Vagina (tissue), 2 donors: ENCODE measurements at regions of chr1 and their contacts with region 1.

Region 1: GRCh38 chr1:86499987-86500593 is 31.4 kb downstream of the CLCA1 start:
- DNase-seq: no peak
- H3K4me3 ChIP-seq: no peak overlapping the region
- H3K27ac ChIP-seq: no peak overlapping the region
- H3K4me1 ChIP-seq: peaks cover 21% of the 10 kb centered on the region
- H3K27me3 ChIP-seq: no peaks in the 10 kb centered on the region
- CTCF ChIP-seq: peak; percentile 36 to 65 (median 64)
- POLR2A ChIP-seq: no peak

Region 2: DNA sequence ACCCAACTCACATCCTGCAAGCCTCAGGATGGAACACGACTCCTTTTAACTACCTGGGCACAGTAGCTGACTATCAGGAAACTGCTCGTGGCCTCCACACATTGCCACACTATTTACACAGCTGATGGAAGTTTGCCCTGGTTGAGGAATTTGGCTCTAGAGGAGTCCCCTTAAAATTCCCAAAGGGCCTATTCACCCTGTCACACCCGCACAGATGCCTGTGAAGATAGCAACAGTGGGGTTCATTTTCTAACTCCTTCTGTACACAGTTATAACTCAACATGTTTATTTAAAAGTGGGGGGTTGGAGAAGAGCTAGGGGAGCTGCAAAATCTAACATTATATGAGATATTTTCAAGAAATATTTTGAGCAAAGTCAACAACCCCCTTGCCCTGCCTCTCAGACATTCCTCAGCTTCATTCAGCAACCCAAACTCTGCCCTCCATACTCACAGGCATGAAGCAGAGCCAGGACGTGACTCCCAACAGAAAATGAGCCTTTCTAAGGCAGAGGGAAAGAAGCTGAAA is 955.3 kb before region 1 on chr1:
- intact Hi-C with region 1: no loop called
- DNase-seq: no peak
- H3K4me3 ChIP-seq: no peak overlapping the region
- H3K27ac ChIP-seq: no peak overlapping the region
- H3K4me1 ChIP-seq: peaks cover 18% of the 10 kb centered on the region
- H3K27me3 ChIP-seq: no peaks in the 10 kb centered on the region
- CTCF ChIP-seq: no peak
- POLR2A ChIP-seq: no peak

Region 3: DNA sequence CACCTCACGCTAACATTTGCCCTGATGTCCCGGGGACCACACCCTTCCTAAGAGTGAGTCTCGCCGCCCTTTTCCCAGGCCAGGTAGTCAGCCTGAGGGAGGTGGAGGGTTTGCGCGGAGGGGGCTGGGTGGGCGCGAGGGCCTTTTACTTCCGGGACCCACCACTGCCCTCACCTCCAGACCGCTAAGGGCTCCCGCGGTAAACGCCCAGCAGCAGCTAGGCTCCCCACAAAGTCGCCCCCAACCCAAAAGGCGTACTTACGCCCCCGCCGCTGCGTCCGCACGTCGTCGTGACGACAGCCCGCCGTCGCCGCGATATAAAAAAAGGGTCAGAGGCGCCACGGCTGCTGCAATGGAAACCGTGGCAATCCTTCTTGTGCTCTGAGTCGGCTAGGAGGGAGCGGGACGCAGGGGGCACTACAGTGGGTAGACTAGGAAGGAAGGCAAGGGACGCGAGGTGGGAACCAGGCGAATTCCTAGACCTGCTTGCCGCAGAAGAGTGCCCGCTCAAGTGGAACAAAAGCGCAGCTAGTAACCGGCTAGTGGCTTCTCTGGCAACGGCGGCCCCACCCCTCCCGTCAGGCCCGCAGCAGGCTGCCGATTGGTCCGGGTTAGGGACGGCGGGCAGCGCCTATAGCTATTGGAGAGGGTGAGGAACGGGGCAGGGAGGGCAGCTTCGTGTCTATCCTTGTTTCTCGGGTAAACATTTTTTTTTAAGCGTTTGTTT is 104.2 kb before region 1 on chr1 and contains the start of gene ODF2L:
- intact Hi-C with region 1: loop called (anchors 10 kb)
- DNase-seq: no peak
- H3K4me3 ChIP-seq: peak within 1 kb of the TSS; percentile 88 to 98
- H3K27ac ChIP-seq: peak within 1 kb of the TSS; percentile 80
- H3K4me1 ChIP-seq: peaks cover 26% of the 10 kb centered on the region
- H3K27me3 ChIP-seq: no peaks in the 10 kb centered on the region
- CTCF ChIP-seq: no peak
- POLR2A ChIP-seq: peak in 1 of 2 donors; percentile 55
- total RNA-seq, gene ODF2L: 40.5 TPM